ENCODE measurements at regions of chr3 and their contacts with region 1.

Region 1: GRCh38 chr3:36700537-36701248 is 63.7 kb downstream of the DCLK3 start:
- DNase-seq: peak; percentile 44 to 95 (median 66)

Region 2: DNA sequence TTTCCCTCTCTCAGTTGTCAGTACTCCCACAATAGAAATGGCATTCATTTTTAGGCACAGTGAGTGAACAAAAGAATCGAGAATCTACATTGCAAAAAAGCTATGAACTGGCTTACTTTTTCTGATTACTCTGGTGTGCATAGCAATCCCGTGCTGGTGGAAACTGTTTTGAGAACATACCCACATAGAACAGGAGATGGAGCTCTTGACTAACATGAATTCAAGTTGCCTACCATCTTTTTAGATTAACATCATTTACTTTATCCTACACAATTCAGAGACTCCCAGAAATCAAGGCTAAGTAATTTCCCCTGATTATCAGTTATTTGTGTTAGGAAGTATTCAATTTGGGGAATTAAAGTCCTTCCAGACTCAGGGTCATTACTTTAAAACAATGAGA is 734.8 kb before region 1 on chr3:
- intact Hi-C with region 1: loop called (anchors 1 kb)
- DNase-seq: no peak